Posterior vena cava (tissue), 2 donors: ENCODE measurements at regions of chr21 and their contacts with region 1.

Region 1: DNA sequence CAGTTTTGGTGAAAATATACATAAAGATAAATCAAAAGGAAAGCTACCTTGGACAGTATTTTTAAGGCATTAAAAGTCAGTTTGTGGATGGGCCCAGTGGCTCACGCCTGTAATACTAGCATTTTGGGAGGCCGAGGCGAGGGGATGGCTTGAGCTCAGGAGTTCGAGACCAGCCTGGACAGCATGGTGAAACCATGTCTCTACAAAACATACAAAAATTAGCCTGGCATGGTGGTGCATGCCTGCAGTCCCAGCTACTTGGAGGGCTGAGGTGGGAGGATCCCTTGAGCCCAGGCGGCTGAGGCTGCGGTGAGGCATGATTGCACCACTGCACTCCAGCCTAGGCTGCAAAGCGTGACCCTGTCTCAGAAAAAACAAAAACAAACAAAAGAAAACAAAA is 1253.8 kb downstream of the MRPL39 start:
- DNase-seq: no peak

Region 2: GRCh38 chr21:24369746-24370145 is 16.3 kb after region 1 on chr21:
- intact Hi-C with region 1: loop called in 1 of 2 experiments (anchors 1 kb)
- DNase-seq: no peak